ENCODE measurements at regions of chr6 and their contacts with region 1.

Region 1: DNA sequence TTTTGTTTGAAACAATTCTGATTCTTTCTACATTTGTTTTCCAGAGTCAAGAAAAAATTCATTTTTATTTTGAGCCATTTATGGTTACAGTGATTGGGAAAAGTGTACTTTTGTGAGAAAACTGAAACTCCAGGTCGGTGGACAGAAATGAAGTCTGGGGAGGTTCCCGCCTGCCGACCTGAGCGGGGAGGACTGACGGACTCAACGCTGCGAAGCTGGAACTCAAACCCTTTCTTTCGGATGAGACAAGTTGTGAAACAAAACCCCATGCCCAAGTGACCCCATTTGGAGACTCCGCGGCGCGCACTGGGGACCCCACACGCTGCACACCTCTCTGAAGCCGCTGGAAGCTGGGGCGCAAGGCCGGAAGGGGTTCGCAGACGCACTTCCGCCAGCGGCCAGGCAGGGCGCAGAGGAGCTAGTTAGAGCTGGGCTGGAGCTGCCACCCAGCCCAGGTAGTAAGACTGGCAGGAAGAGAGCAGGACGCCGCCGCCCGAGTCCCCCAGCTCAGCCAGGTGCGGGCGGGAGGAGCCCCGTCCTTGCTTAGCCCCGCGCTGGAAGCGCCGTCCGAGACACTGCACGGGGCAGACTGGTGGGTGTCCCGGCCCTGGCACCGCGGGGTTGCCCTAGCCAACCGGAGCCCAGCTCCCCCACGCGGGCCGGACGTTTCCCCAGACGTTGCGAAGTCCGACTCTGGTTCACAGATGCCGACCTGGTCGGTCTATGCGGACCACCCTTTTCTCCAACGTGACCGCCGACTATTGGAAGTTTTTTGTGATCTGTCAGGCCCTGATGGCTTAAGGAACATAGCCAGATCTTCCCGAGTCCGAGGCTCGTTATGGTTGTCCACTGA is 19.8 kb upstream of the ZSCAN16 start:
- DNase-seq: peak; percentile 90
- H3K4me3 ChIP-seq: peak overlapping the region; percentile 71
- H3K27ac ChIP-seq: peak overlapping the region; percentile 44
- H3K4me1 ChIP-seq: peaks cover 23% of the 10 kb centered on the region
- CTCF ChIP-seq: peak; percentile 68

Region 2: GRCh38 chr6:28124102-28124970 is 19.7 kb after region 1 on chr6 and contains the start of gene ZSCAN16:
- CTCF ChIA-PET with region 1: no interaction called
- POLR2A ChIA-PET with region 1: interaction called, 17 read pairs
- intact Hi-C with region 1: loop called (anchors 2 kb)
- DNase-seq: peak; percentile 85
- H3K4me3 ChIP-seq: peak within 1 kb of the TSS; percentile 73
- H3K27ac ChIP-seq: peak within 1 kb of the TSS; percentile 48
- H3K4me1 ChIP-seq: peaks cover 36% of the 10 kb centered on the region
- CTCF ChIP-seq: no peak
- total RNA-seq, gene ZSCAN16: 8.6 and 10.8 TPM in 2 replicates

Region 3: GRCh38 chr6:28182255-28182654 is 77.6 kb after region 1 on chr6:
- CTCF ChIA-PET with region 1: no interaction called
- POLR2A ChIA-PET with region 1: no interaction called
- intact Hi-C with region 1: no loop called
- DNase-seq: no peak
- H3K4me3 ChIP-seq: no peak overlapping the region
- H3K27ac ChIP-seq: no peak overlapping the region
- H3K4me1 ChIP-seq: no peaks in the 10 kb centered on the region
- CTCF ChIP-seq: no peak

Region 4: GRCh38 chr6:28322661-28323060 is 218.0 kb after region 1 on chr6:
- CTCF ChIA-PET with region 1: no interaction called
- POLR2A ChIA-PET with region 1: no interaction called
- intact Hi-C with region 1: no loop called
- DNase-seq: no peak
- H3K4me3 ChIP-seq: no peak overlapping the region
- H3K27ac ChIP-seq: no peak overlapping the region
- H3K4me1 ChIP-seq: no peaks in the 10 kb centered on the region
- CTCF ChIP-seq: no peak